Transverse colon (tissue), 4 donors: ENCODE measurements at regions of chr1 and their contacts with region 1.

Region 1: GRCh38 chr1:17502326-17502778 is 37.1 kb upstream of the ARHGEF10L start:
- DNase-seq: peak; percentile 93
- H3K4me3 ChIP-seq: no peak overlapping the region
- H3K27ac ChIP-seq: peak overlapping the region; percentile 42 to 58 (median 52)
- H3K4me1 ChIP-seq: peaks cover 6 to 19% (median 9%) of the 10 kb centered on the region in 4 donors
- H3K27me3 ChIP-seq: no peaks in the 10 kb centered on the region
- CTCF ChIP-seq: peak; percentile 88 to 97 (median 93)
- EP300 ChIP-seq: no peak
- POLR2A ChIP-seq: no peak

Region 2: GRCh38 chr1:17606826-17607440 is 104.6 kb after region 1 on chr1:
- in situ Hi-C with region 1: loop called (anchors 5 to 10 kb)
- intact Hi-C with region 1: loop called (anchors 2 kb)
- DNase-seq: peak; percentile 77
- H3K4me3 ChIP-seq: no peak overlapping the region
- H3K27ac ChIP-seq: peak overlapping the region; percentile 19 to 74 (median 60)
- H3K4me1 ChIP-seq: peaks cover 11 to 28% (median 27%) of the 10 kb centered on the region in 4 donors
- H3K27me3 ChIP-seq: no peaks in the 10 kb centered on the region
- CTCF ChIP-seq: peak; percentile 89 to 96 (median 92)
- EP300 ChIP-seq: no peak
- POLR2A ChIP-seq: no peak

Region 3: DNA sequence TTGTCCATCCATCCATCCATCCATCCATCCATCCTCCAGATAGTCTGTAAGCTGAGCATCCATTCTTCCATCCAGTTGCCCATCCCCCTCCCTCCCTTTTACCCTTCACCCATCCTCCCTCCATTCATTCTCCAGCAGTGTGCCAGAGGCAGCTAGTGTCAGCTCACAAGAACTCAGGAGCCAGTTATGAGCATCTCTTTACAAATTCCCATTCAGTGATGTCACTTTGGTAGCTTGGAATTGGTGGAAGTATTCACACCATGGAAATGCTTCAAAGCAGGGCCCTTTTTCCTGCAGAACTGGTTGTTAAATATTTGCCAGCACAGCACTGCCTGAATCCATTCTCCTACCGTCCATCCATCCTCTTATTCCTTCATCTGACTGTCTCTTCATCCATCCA is 109.6 kb after region 1 on chr1:
- in situ Hi-C with region 1: loop called (anchors 5 to 10 kb)
- intact Hi-C with region 1: loop called (anchors 2 kb)
- DNase-seq: no peak
- H3K4me3 ChIP-seq: no peak overlapping the region
- H3K27ac ChIP-seq: no peak overlapping the region
- H3K4me1 ChIP-seq: peaks cover 0 to under 1% (median 0%) of the 10 kb centered on the region in 4 donors
- H3K27me3 ChIP-seq: no peaks in the 10 kb centered on the region
- CTCF ChIP-seq: no peak
- EP300 ChIP-seq: no peak
- POLR2A ChIP-seq: no peak